Psoas muscle (tissue), 8 donors: ENCODE measurements at regions of chr14 and their contacts with region 1.

Region 1: DNA sequence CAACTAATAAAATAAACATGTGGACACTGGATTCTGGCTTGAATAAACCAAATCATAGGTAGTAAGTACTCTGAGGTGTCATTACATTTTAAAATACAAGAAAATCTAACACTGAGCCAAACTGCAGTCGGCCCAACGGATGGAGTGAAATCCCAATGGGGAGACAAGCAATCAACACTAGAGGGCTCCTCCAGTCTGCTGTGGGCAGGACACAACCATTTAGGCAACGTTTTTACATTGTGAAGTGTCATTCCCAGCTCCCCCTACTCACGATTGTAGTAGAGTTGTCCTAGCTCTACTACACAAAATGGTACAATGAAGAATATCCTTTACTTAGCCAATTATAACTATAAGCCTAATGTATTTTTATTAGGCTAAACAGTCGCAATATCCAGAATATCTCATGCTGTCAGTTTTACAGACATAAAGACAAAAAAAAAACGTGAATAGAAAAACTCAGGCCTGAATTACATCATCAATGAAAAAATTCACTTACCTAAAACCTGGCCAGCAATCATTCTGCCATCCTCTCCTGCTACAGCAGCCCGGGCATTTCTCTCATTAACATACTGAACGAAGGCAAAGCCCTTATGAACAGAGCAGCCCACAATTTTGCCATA is 35.7 kb downstream of the HNRNPC start:
- DNase-seq: no peak
- ATAC-seq: peak in 3 of 4 donors; percentile 57 to 62 (median 62)
- H3K4me3 ChIP-seq: peak overlapping the region; percentile 2
- H3K27ac ChIP-seq: no peak overlapping the region
- H3K4me1 ChIP-seq: peaks cover 63% of the 10 kb centered on the region
- H3K27me3 ChIP-seq: no peaks in the 10 kb centered on the region
- CTCF ChIP-seq: peak; percentile 33

Region 2: DNA sequence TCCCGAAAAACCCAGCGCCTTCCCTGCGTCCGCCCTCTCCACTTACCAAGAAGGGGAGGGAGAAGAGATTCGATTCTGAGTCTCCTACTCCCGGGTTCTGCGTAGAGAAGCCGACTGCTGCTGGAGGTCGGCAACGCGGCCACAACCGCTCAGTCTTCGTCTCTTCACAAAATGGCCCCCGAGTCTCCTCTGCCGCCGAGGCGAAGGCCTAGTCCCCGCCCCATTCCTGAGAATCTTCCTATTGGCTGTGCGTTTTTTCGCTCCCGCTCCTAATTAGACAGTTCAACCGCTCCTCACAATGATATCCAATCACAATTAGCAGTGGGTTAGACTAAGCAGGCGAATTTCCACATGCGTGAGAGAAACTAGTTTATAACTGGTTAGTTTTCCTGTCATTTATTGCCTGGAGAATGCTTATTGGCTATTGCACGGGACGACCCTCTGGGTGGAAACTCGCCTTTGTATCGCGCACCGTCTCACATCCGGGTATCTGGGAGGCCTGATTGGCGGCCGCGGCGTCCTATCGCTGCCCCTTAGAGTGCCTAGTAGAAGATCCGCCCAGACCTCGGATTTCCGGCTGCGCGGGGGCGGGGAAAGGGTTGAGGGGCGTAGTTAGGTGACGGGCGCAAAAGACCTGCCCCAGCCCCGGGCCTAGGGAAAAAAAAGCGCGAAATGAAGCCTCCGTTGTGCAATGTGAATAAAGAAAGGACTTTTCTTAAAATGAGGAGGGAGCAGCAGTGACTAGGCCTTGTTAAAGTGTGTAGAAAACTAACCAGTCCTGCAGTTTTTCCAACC is 35.9 kb after region 1 on chr14 and contains the start of gene HNRNPC:
- intact Hi-C with region 1: loop called in 1 of 2 experiments (anchors 5 kb)
- DNase-seq: peak; percentile 100
- ATAC-seq: peak; percentile 94 to 98 (median 97)
- H3K4me3 ChIP-seq: peak within 1 kb of the TSS; percentile 97
- H3K27ac ChIP-seq: peak within 1 kb of the TSS; percentile 98
- H3K4me1 ChIP-seq: peaks cover 33% of the 10 kb centered on the region
- H3K27me3 ChIP-seq: no peaks in the 10 kb centered on the region
- CTCF ChIP-seq: no peak
- total RNA-seq, gene HNRNPC: 217 to 310 (median 245) TPM

Region 3: DNA sequence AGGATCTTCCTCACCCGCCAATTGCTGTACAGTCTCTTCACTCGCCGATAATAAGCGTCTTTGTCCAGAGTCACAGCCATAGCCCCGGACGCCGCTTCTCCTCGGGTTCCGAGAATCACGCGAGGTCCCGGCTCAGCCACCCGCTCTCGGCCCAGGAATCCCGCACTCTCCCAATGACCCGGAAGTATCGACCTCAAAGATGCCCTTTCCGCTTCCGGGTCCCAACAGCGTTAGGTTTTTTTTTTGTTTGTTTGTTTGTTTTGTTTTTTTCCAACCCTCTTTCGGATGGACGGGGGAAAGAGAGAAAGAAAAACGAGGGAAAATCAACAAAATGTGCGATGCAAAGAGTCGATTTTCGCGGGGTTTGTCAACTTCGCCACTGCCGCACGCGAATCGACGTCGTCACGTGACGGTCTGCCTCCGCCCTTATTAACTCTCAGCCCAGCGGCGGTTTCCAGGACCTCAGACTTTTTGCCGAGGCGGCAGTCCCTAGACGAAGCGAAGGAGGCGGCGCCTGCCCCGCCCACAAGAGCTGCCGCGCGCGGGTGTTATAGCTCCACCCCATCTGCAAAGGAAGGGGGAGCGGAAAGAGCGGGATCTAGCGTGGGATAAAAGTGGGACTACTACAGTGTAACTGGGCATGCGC is 150.4 kb after region 1 on chr14 and contains the start of gene SUPT16H:
- intact Hi-C with region 1: loop called in 1 of 2 experiments (anchors 10 kb)
- DNase-seq: peak; percentile 96 to 98
- ATAC-seq: peak; percentile 97 to 99 (median 99)
- H3K4me3 ChIP-seq: peak within 1 kb of the TSS; percentile 82
- H3K27ac ChIP-seq: peak within 1 kb of the TSS; percentile 90
- H3K4me1 ChIP-seq: peaks cover 25% of the 10 kb centered on the region
- H3K27me3 ChIP-seq: no peaks in the 10 kb centered on the region
- CTCF ChIP-seq: no peak
- total RNA-seq, gene SUPT16H: 23.6 to 29.2 (median 26.8) TPM